MCF 10A (cell line): ENCODE measurements at regions of chr1 and their contacts with region 1.

Region 1: GRCh38 chr1:85464497-85465098 is 361 bp downstream of the DDAH1 start:
- DNase-seq: peak; percentile 53
- H3K4me3 Mint-ChIP-seq: peak overlapping the region; percentile 57
- H3K27ac Mint-ChIP-seq: no peak overlapping the region
- H3K4me1 Mint-ChIP-seq: peaks cover 11% of the 10 kb centered on the region
- H3K27me3 Mint-ChIP-seq: no peaks in the 10 kb centered on the region
- CTCF ChIP-seq: no peak

Region 2: DNA sequence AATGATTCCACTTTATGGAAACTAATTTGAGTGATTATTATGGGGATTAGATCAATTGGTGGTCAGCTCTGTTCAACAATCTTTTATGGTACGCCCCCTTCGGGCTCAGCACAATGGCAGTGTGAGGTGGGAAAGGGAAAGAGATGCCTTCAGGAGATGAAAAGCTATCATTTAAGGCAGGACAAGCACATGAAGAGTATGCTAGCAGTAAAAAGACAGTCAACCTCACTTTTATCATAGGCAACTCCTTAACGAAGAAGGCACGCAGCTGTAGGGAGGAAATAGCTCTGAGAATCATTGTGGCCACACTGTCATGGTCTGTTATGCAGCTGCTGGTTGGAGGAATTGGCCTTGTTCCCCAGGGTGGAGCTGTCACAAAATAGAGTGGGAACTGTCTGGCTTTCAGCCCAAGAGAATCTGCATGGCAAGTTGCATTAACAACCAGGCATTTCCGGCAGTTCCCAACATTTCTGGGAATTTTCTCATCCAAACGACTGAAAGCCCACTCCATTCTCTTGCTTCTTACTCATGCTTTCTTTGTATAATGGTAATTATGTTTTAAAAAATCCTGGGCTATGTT is 133.8 kb before region 1 on chr1:
- CTCF ChIA-PET with region 1: interaction called, 3 read pairs
- POLR2A ChIA-PET with region 1: no interaction called
- intact Hi-C with region 1: loop called (anchors 10 kb)
- DNase-seq: peak; percentile 78
- H3K4me3 Mint-ChIP-seq: peak overlapping the region; percentile 12
- H3K27ac Mint-ChIP-seq: peak overlapping the region; percentile 90
- H3K4me1 Mint-ChIP-seq: peaks cover 36% of the 10 kb centered on the region
- H3K27me3 Mint-ChIP-seq: no peaks in the 10 kb centered on the region
- CTCF ChIP-seq: no peak

Region 3: GRCh38 chr1:85406887-85407533 is 57.6 kb before region 1 on chr1:
- CTCF ChIA-PET with region 1: interaction called, 3 read pairs
- POLR2A ChIA-PET with region 1: interaction called, 6 read pairs
- intact Hi-C with region 1: loop called (anchors 2 kb)
- DNase-seq: peak; percentile 81
- H3K4me3 Mint-ChIP-seq: no peak overlapping the region
- H3K27ac Mint-ChIP-seq: peak overlapping the region; percentile 92
- H3K4me1 Mint-ChIP-seq: peaks cover 14% of the 10 kb centered on the region
- H3K27me3 Mint-ChIP-seq: no peaks in the 10 kb centered on the region
- CTCF ChIP-seq: no peak